PC-3 (cell line): ENCODE measurements at regions of chr1 and their contacts with region 1.

Region 1: DNA sequence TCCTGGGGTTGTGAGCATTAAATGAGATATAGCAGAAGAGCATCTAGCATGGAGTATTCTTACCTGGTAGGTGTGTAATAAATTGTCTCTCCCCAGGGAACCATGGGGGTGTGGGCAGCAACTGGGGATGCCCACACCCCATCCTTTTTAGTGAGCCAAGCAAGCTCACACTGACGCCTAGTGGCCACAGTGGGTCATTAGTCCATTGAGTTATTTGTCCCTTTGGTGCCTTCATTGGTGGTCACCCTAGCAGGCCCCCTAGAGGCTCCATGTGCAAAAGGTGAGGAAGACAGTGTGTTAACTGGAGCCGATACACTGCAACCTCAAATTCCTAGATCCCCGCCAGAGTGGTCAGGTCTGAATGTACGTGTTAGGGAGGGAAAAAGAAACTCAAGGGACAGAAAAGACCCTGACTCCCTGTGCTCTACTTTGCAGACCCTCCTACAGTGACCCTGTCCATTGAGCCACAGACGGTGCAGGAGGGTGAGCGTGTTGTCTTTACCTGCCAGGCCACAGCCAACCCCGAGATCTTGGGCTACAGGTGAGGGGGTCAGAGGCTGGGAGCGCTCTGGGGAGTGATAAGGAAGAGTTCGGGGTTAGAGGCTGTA is 93.3 kb upstream of the CD1D start:
- DNase-seq: peak; percentile 87
- ATAC-seq: peak; percentile 87
- H3K4me3 ChIP-seq: no peak overlapping the region
- H3K27ac ChIP-seq: no peak overlapping the region
- H3K4me1 ChIP-seq: no peaks in the 10 kb centered on the region
- H3K27me3 ChIP-seq: no peaks in the 10 kb centered on the region
- CTCF ChIP-seq: peak; percentile 100

Region 2: DNA sequence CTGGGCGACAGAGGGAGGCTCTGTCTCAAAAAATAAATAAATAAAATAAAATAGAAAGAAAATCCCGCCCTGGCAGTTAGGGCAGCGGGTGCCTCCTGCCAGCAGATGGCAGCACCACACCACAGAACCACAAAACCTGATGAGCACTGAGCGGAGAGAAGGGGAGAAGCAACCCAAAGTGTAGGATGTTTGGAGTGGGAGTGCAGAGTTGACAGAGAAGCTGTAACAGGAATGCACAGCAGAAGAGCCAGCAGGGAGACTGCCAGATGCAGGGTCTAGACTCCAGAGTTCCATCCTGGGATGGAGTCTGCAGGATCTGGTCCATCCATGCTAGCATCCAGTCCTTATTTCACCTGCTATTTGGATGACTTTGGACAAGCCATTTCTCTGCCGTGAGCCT is 123.7 kb before region 1 on chr1:
- CTCF ChIA-PET with region 1: no interaction called
- POLR2A ChIA-PET with region 1: no interaction called
- intact Hi-C with region 1: loop called (anchors 1 kb)
- DNase-seq: peak; percentile 87
- ATAC-seq: peak; percentile 81
- H3K4me3 ChIP-seq: no peak overlapping the region
- H3K27ac ChIP-seq: no peak overlapping the region
- H3K4me1 ChIP-seq: peaks cover 22% of the 10 kb centered on the region
- H3K27me3 ChIP-seq: peaks cover 24% of the 10 kb centered on the region
- CTCF ChIP-seq: peak; percentile 87

Region 3: DNA sequence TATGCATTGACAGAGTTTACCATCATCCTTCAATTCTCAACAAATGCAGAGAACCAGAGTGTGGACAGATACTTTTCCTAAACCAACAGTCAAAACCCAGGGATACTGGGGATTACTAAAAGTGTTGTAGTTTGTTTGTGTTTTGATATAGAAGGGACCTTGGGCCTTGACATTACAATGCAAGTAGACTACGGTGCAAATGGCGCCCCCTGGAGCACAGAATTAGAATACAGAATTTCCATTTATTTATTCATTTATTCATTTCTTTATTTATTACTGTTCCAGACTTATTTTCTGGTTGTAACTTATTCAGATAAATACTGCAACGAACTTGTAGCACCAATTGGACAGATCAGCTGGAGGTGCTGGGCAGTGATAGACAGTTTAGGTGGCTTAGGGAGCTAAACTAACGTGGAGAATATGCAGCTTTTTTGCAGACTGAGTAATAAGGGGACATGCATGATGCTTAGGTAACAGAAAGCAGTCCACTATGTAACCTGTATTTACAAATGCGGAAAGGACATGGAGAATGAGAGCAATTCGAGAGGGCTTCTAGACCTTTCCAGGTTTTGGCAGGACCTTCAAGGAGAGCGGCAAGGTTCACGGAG is 51.3 kb before region 1 on chr1:
- CTCF ChIA-PET with region 1: no interaction called
- POLR2A ChIA-PET with region 1: no interaction called
- intact Hi-C with region 1: loop called (anchors 1 kb)
- DNase-seq: peak; percentile 79
- ATAC-seq: peak; percentile 24; the same call in 1 of the 2 replicates
- H3K4me3 ChIP-seq: no peak overlapping the region
- H3K27ac ChIP-seq: no peak overlapping the region
- H3K4me1 ChIP-seq: peaks cover 22% of the 10 kb centered on the region
- H3K27me3 ChIP-seq: no peaks in the 10 kb centered on the region
- CTCF ChIP-seq: peak; percentile 96

Region 4: DNA sequence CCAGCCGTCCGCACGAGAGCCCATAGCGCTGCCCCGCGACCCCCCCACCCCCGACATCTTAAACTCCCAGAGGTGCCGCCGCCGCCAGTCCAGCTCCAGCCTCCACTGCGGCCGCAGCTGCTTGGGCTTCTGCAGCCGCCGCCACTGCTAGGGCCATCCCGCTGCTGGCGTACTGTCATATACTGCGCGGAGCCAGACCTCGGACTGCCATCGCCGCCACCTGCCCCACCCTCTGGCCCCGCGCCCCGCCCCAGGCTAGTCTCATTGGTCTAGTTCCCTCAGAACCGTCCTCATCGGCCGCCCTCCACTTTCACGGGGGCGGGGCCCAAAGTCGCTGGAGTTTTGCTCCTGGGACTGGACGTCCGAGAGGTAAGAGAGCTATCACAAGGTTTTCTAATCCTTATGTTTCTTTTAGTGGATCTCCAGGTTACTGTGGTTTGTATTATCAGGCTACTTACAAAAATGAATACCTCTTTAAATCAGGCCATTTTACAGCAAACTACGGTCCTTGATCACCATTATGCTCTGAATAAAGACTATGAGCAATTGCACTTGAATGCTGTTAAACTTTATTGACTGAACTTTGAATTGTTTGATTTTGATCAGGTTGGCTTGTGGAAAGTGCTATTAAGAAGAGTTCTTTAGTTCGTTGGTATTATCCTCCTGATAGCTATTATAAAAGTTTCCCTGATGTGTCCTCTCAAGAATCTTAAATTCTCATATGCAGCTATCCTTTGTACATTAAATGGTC is 90.5 kb after region 1 on chr1:
- CTCF ChIA-PET with region 1: no interaction called
- POLR2A ChIA-PET with region 1: no interaction called
- intact Hi-C with region 1: no loop called
- DNase-seq: peak; percentile 70
- ATAC-seq: peak; percentile 99
- H3K4me3 ChIP-seq: peak overlapping the region; percentile 22
- H3K27ac ChIP-seq: no peak overlapping the region
- H3K4me1 ChIP-seq: no peaks in the 10 kb centered on the region
- H3K27me3 ChIP-seq: peaks cover 89% of the 10 kb centered on the region
- CTCF ChIP-seq: no peak